ENCODE measurements at regions of chr18 and their contacts with region 1.

Region 1: GRCh38 chr18:37844209-37844970 is 278.8 kb upstream of the CELF4 start:
- DNase-seq: no peak
- H3K4me3 ChIP-seq: no peak overlapping the region
- H3K27ac ChIP-seq: no peak overlapping the region
- H3K4me1 ChIP-seq: no peaks in the 10 kb centered on the region
- H3K27me3 ChIP-seq: no peaks in the 10 kb centered on the region
- CTCF ChIP-seq: no peak
- EP300 ChIP-seq: no peak
- POLR2A ChIP-seq: no peak

Region 2: GRCh38 chr18:37502036-37502435 is 342.4 kb before region 1 on chr18:
- in situ Hi-C with region 1: no loop called
- intact Hi-C with region 1: no loop called
- DNase-seq: no peak
- H3K4me3 ChIP-seq: no peak overlapping the region
- H3K27ac ChIP-seq: no peak overlapping the region
- H3K4me1 ChIP-seq: no peaks in the 10 kb centered on the region
- H3K27me3 ChIP-seq: no peaks in the 10 kb centered on the region
- CTCF ChIP-seq: no peak
- EP300 ChIP-seq: no peak
- POLR2A ChIP-seq: no peak

Region 3: DNA sequence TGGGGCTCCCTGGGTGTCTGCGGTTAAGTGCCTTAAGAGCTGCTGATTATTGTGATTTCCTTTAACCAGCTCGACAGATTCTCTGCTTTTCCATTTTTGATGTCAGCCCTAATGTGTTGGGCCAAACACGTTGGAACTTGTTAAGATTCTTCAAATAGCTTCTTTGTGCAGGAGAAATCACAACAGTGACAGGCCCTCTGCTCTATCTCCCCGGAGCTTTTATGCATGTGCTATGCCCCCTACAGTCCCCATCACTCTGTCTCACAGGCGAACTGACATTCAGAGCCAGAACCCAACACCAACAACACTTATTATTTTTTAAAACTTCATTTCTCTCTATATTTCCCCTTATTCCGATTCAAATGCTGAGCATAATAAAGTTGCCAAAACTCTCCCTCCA is 92.9 kb after region 1 on chr18:
- in situ Hi-C with region 1: loop called in 1 of 4 experiments (anchors 25 kb)
- intact Hi-C with region 1: no loop called
- DNase-seq: no peak
- H3K4me3 ChIP-seq: no peak overlapping the region
- H3K27ac ChIP-seq: no peak overlapping the region
- H3K4me1 ChIP-seq: no peaks in the 10 kb centered on the region
- H3K27me3 ChIP-seq: no peaks in the 10 kb centered on the region
- CTCF ChIP-seq: no peak
- EP300 ChIP-seq: no peak
- POLR2A ChIP-seq: no peak